ENCODE measurements at regions of chr19 and their contacts with region 1.

Region 1: DNA sequence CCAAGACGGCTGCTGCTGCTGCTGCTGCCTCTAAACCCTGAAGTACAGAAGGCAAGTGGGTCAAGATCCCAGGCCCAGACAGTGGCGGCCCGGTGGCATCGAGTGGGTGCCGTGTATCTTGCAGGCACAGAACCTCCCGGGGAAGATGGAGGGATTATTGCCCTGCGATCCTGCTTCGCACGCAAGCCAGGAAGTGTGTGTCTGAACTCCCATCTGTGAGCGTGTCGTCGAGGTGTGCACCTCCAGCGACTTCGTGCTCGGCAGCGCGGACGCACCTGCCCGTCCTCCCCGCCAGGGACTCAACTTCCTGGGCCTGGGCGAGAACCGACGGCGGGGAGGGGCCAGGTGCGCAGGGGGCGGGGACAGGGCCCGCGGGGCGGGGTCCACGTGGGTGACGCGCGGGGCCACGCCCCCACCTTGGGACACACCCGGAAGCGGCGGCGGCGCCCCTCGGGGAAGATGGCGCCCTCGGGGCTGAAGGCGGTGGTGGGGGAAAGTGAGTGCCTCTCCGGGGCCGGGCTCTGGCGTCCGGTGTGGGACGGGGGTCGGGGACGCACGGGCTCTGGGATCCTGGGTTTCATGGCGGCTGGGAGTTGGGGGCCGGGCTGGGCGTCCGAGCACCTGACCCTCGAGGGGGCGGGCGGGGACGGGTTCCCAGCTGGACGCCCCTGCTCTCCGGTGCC is at the start of gene STXBP2:
- DNase-seq: peak; percentile 87 to 98 (median 96)
- ATAC-seq: peak; percentile 88
- H3K4me3 ChIP-seq: peak within 1 kb of the TSS; percentile 79
- H3K27ac ChIP-seq: peak within 1 kb of the TSS; percentile 93
- H3K4me1 ChIP-seq: peaks cover 15 to 50% of the 10 kb centered on the region in 2 experiments; a peak in 4 of 5 replicates
- H3K27me3 ChIP-seq: no peaks in the 10 kb centered on the region; a peak in 1 of 5 replicates
- CTCF ChIP-seq: no peak; a peak in 1 of 6 replicates
- EP300 ChIP-seq: no peak
- POLR2A ChIP-seq: peak; percentile 78
- RAD21 ChIP-seq: no peak
- polyA plus RNA-seq, gene STXBP2: 2.5 to 9.1 TPM

Region 2: DNA sequence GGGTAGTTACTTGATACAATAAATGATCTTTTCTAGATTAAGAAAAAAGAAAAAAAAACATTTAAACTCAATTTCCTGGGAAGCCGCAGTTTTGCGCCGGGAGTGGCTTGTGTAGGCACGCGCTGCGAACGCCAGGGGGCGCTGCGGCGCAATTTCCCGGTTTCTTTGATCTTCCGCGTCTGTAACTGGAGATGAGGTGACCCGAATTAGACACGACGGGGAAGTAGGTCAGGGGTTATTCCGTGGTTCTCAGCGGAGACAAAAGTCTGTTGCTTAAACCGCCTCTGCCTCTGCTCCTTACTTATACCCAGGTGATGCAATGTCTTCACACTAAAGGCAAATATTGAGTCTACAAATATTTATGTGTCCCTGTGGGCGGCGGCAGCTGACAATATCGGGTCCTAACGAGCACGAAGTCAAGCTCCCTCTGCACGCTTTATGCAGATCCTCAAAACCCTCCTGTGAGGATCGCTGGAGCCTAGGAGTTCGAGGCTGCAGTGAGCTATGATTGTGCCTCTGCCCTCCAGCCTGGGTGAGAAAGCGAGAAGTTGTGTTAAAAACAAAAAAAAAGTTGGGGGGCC is 15.3 kb after region 1 on chr19:
- CTCF ChIA-PET with region 1: no interaction called
- POLR2A ChIA-PET with region 1: interaction called, 18 read pairs
- in situ Hi-C with region 1: no loop called
- intact Hi-C with region 1: no loop called
- DNase-seq: peak; percentile 79 to 92 (median 84)
- ATAC-seq: peak; percentile 88
- H3K4me3 ChIP-seq: no peak overlapping the region
- H3K27ac ChIP-seq: peak overlapping the region; percentile 49; the same call in 1 of the 3 replicates
- H3K4me1 ChIP-seq: peaks cover 2 to 11% of the 10 kb centered on the region in 2 experiments; a peak in 3 of 5 replicates
- H3K27me3 ChIP-seq: no peaks in the 10 kb centered on the region
- CTCF ChIP-seq: peak; percentile 88 to 99 (median 96)
- EP300 ChIP-seq: peak; percentile 70
- POLR2A ChIP-seq: no peak
- RAD21 ChIP-seq: peak; percentile 71 to 79